ENCODE measurements at regions of chr17 and their contacts with region 1.

Region 1: GRCh38 chr17:74457146-74457819 is 9.2 kb upstream of the CD300A start:
- DNase-seq: peak; percentile 88
- ATAC-seq: peak; percentile 17; the same call in 1 of the 2 replicates
- H3K4me3 ChIP-seq: no peak overlapping the region
- H3K27ac ChIP-seq: no peak overlapping the region
- H3K4me1 ChIP-seq: peaks cover 14% of the 10 kb centered on the region
- H3K27me3 ChIP-seq: no peaks in the 10 kb centered on the region
- CTCF ChIP-seq: peak; percentile 99

Region 2: DNA sequence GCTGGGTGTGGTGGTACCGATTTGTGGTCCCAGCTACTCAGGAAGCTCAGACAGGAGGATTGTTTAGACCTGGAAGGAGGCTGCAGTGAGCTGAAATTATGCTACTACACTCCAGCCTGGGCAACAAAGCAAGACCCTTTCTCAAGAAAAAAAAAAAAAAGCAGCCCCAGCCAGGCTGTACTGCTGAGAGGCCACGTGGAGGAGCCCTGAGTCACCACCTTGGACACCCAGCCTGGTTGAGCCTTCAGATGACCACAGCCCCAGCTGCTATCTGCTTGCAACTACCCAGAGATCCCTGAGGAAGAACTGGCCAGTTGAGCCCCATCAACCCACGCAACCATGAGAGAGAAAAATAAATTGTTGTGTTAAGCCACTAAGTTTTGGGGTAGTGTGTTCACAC is 49.0 kb before region 1 on chr17:
- CTCF ChIA-PET with region 1: no interaction called
- POLR2A ChIA-PET with region 1: no interaction called
- intact Hi-C with region 1: loop called (anchors 2 kb)
- DNase-seq: peak; percentile 63
- ATAC-seq: peak; percentile 87
- H3K4me3 ChIP-seq: no peak overlapping the region
- H3K27ac ChIP-seq: no peak overlapping the region
- H3K4me1 ChIP-seq: peaks cover 6% of the 10 kb centered on the region; the same call in 1 of the 2 replicates
- H3K27me3 ChIP-seq: no peaks in the 10 kb centered on the region
- CTCF ChIP-seq: peak; percentile 50

Region 3: DNA sequence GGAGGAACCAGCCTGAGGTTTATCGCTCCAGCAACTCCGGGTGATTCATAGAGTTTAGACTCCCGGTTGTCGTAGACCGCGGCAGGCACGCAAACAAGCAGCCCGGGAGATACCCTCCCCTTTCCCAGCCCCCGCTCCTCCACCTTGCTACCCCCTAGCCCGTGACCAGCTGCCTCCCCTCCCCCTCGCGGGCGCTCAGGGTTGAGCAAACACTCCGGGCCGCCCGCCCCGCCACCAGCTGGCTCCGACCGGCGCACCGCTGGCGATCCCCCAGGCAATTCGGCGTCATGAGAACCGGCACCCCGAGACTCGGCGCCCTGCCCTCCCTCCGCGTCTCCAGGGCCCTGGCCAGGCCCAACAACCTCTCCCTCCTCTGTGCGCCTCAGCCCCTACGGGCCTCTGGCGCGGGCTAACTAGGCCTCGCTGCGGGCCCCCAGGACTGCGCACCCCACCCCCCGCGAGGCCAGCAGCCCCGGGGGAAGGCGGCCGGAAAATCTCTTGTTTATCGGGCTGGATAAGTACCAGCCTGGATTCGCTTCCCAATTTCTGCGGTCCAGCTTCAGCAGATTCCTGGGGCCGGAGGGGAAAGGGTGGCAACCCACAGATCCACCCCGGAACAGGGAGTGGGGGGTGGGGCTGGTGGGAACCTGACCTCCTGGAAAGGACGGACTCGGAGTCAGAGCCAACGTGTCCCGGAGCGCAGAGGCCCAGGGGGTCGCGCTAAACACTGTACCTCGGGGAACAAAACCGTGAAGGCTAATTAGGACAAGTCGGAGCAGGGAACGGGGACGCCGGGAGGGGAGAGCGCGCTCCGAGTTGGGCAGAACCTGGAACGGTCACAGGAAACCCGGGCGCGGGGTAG is 26.3 kb before region 1 on chr17:
- CTCF ChIA-PET with region 1: interaction called, 3 read pairs
- POLR2A ChIA-PET with region 1: interaction called, 5 read pairs
- intact Hi-C with region 1: loop called (anchors 1 kb)
- DNase-seq: peak; percentile 97
- ATAC-seq: peak; percentile 57
- H3K4me3 ChIP-seq: peak overlapping the region; percentile 80
- H3K27ac ChIP-seq: peak overlapping the region; percentile 99
- H3K4me1 ChIP-seq: peaks cover 54% of the 10 kb centered on the region
- H3K27me3 ChIP-seq: no peaks in the 10 kb centered on the region
- CTCF ChIP-seq: no peak

Region 4: DNA sequence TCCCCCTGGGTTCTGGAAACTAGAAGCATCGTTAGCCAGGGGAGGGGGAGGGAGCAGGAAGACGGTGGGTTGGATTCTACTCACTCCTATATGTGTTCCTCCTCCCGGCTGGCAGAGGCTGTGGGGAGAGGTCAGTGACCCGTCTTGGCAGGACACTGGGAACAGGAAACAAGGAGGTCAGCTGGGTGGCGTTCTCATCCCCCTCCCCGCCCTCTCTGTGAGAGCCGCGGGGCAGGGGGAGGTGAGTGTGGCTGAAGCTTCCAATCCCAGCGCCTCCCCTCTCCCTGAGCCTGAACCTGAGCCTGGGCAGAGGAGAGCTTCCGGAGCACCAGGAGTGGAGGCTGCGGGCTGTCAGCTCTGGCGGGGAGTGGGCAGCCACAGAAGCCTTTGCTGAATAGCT is 12.9 kb before region 1 on chr17:
- CTCF ChIA-PET with region 1: no interaction called
- POLR2A ChIA-PET with region 1: interaction called, 11 read pairs
- intact Hi-C with region 1: no loop called
- DNase-seq: no peak
- ATAC-seq: no peak
- H3K4me3 ChIP-seq: no peak overlapping the region
- H3K27ac ChIP-seq: no peak overlapping the region
- H3K4me1 ChIP-seq: peaks cover 13% of the 10 kb centered on the region
- H3K27me3 ChIP-seq: no peaks in the 10 kb centered on the region
- CTCF ChIP-seq: no peak

Region 5: DNA sequence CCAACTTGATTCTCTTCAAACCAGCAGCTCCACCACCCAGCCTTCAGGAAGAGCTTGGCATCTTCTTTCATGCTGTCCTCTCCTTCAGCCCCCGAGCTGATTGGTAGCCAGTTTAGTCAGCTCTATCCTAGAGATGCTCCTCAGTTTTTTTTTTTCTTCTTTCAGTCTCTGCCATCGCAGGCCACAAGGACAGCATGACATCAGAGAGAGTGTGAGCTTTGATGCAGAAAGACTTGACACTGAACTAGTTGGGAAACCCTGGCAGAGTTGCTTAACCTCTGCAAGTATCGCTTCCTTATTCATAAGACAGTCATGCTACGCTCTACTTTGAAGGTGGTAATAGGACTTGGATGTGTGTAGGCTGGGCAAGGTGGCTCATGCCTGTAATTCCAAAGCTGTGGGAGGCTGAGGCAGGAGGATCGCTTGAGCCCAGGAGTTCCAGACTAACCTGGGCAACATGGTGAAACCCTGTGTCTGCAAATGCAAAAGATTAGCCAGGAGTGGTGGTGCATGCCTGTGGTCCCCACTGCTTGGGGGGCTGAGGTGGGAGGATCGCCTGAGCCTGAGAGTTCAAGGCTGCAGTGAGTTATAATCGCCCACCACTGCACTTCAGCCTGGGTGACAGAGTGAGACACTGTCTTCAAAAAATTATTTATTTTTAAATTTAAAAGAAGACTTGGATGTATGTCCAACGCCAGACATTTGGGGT is 71.4 kb after region 1 on chr17:
- CTCF ChIA-PET with region 1: no interaction called
- POLR2A ChIA-PET with region 1: interaction called, 6 read pairs
- intact Hi-C with region 1: loop called (anchors 2 kb)
- DNase-seq: no peak
- ATAC-seq: no peak
- H3K4me3 ChIP-seq: no peak overlapping the region
- H3K27ac ChIP-seq: no peak overlapping the region
- H3K4me1 ChIP-seq: no peaks in the 10 kb centered on the region
- H3K27me3 ChIP-seq: peaks cover 78% of the 10 kb centered on the region
- CTCF ChIP-seq: no peak